Activated CD4-positive, alpha-beta memory T cell treated with anti-CD3 and anti-CD28 coated beads, Interleukin-2, amount 10 ng/mL, durations not matched to agents 7 days and 5 days (primary cell): ENCODE measurements at regions of chr6 and their contacts with region 1.

Region 1: GRCh38 chr6:125906158-125906998 is 50.2 kb upstream of the HINT3 start:
- DNase-seq: peak; percentile 45
- H3K4me3 Mint-ChIP-seq: no peak overlapping the region
- H3K27ac Mint-ChIP-seq: no peak overlapping the region
- H3K4me1 Mint-ChIP-seq: peaks cover 52% of the 10 kb centered on the region
- H3K27me3 Mint-ChIP-seq: no peaks in the 10 kb centered on the region

Region 2: GRCh38 chr6:125129354-125129753 is 777.0 kb before region 1 on chr6:
- CTCF ChIA-PET with region 1: no interaction called
- POLR2A ChIA-PET with region 1: no interaction called
- DNase-seq: no peak
- H3K4me3 Mint-ChIP-seq: no peak overlapping the region
- H3K27ac Mint-ChIP-seq: no peak overlapping the region
- H3K4me1 Mint-ChIP-seq: no peaks in the 10 kb centered on the region
- H3K27me3 Mint-ChIP-seq: peaks cover 2% of the 10 kb centered on the region

Region 3: DNA sequence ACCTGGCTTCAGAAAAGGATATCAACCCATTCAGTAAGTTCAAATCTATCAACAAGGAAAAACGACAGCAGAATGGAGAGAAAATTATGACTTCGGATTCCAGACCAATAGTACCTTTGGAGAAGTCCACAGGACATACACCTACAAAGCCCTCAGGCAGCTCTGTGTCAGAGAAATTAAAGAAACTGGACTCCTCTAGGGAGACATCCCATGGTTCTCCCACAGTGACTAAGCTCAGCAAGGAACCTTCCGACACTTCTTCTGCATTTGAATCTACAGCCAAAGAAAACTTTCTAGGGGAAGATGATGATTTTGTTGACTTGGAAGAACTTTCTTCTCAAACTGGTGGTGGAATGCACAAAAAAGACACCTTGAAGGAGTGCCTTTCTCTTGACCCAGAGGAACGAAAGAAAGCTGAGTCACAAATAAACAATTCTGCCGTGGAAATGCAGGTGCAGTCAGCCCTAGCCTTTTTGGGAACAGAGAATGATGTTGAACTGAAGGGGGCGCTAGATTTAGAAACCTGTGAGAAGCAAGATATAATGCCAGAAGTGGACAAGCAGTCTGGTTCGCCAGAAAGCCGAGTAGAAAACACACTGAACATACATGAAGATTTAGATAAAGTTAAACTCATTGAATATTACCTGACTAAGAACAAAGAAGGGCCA is 17.3 kb before region 1 on chr6:
- CTCF ChIA-PET with region 1: interaction called, 30 read pairs
- POLR2A ChIA-PET with region 1: interaction called, 3 read pairs
- DNase-seq: no peak
- H3K4me3 Mint-ChIP-seq: no peak overlapping the region
- H3K27ac Mint-ChIP-seq: no peak overlapping the region
- H3K4me1 Mint-ChIP-seq: no peaks in the 10 kb centered on the region
- H3K27me3 Mint-ChIP-seq: no peaks in the 10 kb centered on the region

Region 4: GRCh38 chr6:125918681-125919566 is 12.5 kb after region 1 on chr6:
- CTCF ChIA-PET with region 1: interaction called, 14 read pairs
- POLR2A ChIA-PET with region 1: interaction called, 22 read pairs
- DNase-seq: peak; percentile 58
- H3K4me3 Mint-ChIP-seq: peak overlapping the region; percentile 74
- H3K27ac Mint-ChIP-seq: peak overlapping the region; percentile 82
- H3K4me1 Mint-ChIP-seq: peaks cover 46% of the 10 kb centered on the region
- H3K27me3 Mint-ChIP-seq: no peaks in the 10 kb centered on the region